Activated T-helper 2 cell treated with anti-CD3 and anti-CD28 coated beads, Interferon-gamma antibody, Interleukin-2, Interleukin-4, amounts not matched to agents 10 μg/mL and 5 μg/mL and 100 μg/mL, durations not matched to agents 14 hours and 24 hours and 36 hours (primary cell): ENCODE measurements at regions of chr2 and their contacts with region 1.

Region 1: GRCh38 chr2:191038241-191038725 is 24.3 kb upstream of the STAT1 start:
- DNase-seq: no peak
- H3K4me3 Mint-ChIP-seq: peak overlapping the region; percentile 31
- H3K27ac Mint-ChIP-seq: peak overlapping the region; percentile 19
- H3K4me1 Mint-ChIP-seq: peaks cover 38% of the 10 kb centered on the region
- H3K27me3 Mint-ChIP-seq: no peaks in the 10 kb centered on the region

Region 2: GRCh38 chr2:191020221-191020741 is 18.0 kb before region 1 on chr2:
- intact Hi-C with region 1: loop called (anchors 2 kb)
- DNase-seq: peak; percentile 96
- H3K4me3 Mint-ChIP-seq: no peak overlapping the region
- H3K27ac Mint-ChIP-seq: no peak overlapping the region
- H3K4me1 Mint-ChIP-seq: peaks cover 35% of the 10 kb centered on the region
- H3K27me3 Mint-ChIP-seq: no peaks in the 10 kb centered on the region

Region 3: DNA sequence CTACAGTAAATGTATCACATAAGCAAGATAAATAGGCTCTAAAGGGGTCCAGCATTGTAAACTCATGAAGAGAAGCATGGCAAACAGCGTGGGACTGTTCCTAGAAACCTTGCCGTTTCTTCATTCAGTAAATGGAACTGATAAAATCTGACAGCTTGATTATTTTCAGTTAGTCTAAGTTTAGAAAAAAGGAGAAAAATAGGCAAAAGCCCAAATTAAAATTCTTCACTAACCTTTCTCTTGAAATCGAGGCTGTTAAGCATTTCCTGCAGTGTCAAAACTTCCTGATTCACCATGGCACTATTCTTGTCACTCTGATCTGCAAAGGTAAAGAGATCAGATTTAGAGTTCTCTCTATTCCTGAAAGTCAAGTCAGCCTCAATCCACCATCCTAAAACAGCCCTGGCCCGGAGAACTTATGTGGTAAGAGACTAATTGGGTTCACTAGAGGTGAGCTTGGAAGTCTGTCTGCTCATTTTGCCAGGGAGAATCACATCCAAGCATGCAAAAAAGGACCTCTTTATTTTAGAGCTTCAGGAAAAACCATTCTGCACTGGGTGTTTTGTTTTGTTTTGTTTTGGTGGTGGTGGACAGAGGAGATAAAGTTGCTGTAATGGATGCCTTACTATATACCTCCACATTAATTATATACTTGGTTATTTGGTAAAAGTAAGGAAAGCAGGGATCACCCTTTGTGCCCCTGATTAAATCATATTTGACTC is 28.1 kb after region 1 on chr2:
- intact Hi-C with region 1: no loop called
- DNase-seq: no peak
- H3K4me3 Mint-ChIP-seq: peak overlapping the region; percentile 76
- H3K27ac Mint-ChIP-seq: peak overlapping the region; percentile 80
- H3K4me1 Mint-ChIP-seq: peaks cover 74% of the 10 kb centered on the region
- H3K27me3 Mint-ChIP-seq: no peaks in the 10 kb centered on the region